Activated CD4-positive, alpha-beta T cell treated with anti-CD3 and anti-CD28 coated beads for 36 hours (primary cell): ENCODE measurements at regions of chr21 and their contacts with region 1.

Region 1: GRCh38 chr21:42002421-42002958 is 7.7 kb downstream of the ZBTB21 start:
- DNase-seq: peak; percentile 90
- ATAC-seq: peak; percentile 92
- H3K4me3 Mint-ChIP-seq: peak overlapping the region; percentile 52
- H3K27ac Mint-ChIP-seq: peak overlapping the region; percentile 93
- H3K4me1 Mint-ChIP-seq: peaks cover 61% of the 10 kb centered on the region
- H3K27me3 Mint-ChIP-seq: no peaks in the 10 kb centered on the region

Region 2: DNA sequence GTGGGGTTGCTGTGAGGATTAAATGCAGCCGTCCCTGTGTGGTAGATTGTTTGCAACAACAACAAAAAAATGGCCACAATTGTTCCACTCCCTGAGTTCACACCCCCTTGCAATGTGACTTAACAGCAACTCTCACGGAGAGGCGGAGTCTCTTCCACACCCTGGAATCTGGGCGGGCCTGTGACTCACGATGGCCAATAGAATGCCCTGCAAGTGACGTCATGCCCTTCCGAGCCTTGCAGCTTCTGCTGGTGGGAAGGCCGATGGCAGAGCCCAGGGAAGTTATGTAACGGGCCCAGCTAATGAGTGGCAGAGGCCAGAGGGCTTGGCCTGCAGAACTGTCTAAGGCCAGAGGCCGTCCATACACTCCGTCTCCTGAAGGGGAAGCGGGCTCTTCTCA is 323.5 kb before region 1 on chr21:
- CTCF ChIA-PET with region 1: no interaction called
- POLR2A ChIA-PET with region 1: no interaction called
- intact Hi-C with region 1: no loop called
- DNase-seq: peak; percentile 37
- ATAC-seq: peak; percentile 33
- H3K4me3 Mint-ChIP-seq: no peak overlapping the region
- H3K27ac Mint-ChIP-seq: no peak overlapping the region
- H3K4me1 Mint-ChIP-seq: no peaks in the 10 kb centered on the region
- H3K27me3 Mint-ChIP-seq: peaks cover 3% of the 10 kb centered on the region

Region 3: GRCh38 chr21:41901099-41901498 is 101.4 kb before region 1 on chr21:
- CTCF ChIA-PET with region 1: interaction called, 3 read pairs
- POLR2A ChIA-PET with region 1: interaction called, 5 read pairs
- intact Hi-C with region 1: loop called in 1 of 2 experiments (anchors 1 kb)
- DNase-seq: peak; percentile 79
- ATAC-seq: peak; percentile 74
- H3K4me3 Mint-ChIP-seq: peak overlapping the region; percentile 32
- H3K27ac Mint-ChIP-seq: peak overlapping the region; percentile 95
- H3K4me1 Mint-ChIP-seq: peaks cover 35% of the 10 kb centered on the region
- H3K27me3 Mint-ChIP-seq: no peaks in the 10 kb centered on the region

Region 4: GRCh38 chr21:41957991-41958766 is 44.3 kb before region 1 on chr21:
- CTCF ChIA-PET with region 1: interaction called, 3 read pairs
- POLR2A ChIA-PET with region 1: interaction called, 3 read pairs
- intact Hi-C with region 1: loop called in 1 of 2 experiments (anchors 5 kb)
- DNase-seq: no peak
- ATAC-seq: no peak
- H3K4me3 Mint-ChIP-seq: no peak overlapping the region
- H3K27ac Mint-ChIP-seq: no peak overlapping the region
- H3K4me1 Mint-ChIP-seq: peaks cover 17% of the 10 kb centered on the region
- H3K27me3 Mint-ChIP-seq: peaks cover 17% of the 10 kb centered on the region

Region 5: DNA sequence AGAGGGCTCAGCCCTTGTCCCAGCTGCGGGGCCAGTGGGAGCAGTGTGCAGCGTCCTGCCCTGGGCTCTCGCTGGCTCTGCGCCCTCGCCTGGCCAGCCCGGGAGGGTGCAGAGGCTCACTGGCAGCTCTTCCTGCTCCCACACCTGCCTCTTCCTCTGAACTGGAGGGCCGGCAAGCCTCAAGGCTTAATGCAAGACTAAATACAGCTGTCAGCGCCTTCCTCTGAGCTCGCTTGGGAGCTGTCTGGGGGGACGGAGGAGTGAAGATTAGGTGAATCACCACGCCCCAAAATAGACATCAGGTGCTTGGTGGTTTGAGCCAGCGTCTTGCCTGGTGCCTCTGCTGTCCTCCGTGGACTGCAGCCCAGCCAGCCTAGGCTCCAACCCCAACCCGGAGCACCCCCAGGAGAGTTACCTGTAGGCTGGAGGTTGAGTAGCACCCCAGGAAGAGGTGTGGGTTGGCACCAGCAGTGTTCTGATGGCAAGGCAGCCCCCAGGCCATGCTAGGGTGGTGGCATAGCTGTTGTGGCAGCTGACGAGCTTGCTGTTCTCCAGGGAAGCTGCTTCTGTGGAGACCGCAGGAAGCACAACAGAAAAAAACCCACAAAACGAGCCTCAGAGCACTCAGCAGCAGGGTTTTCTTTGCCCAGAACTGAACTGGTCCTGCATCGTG is 105.5 kb after region 1 on chr21:
- CTCF ChIA-PET with region 1: interaction called, 6 read pairs
- POLR2A ChIA-PET with region 1: interaction called, 4 read pairs
- intact Hi-C with region 1: loop called in 1 of 2 experiments (anchors 5 kb)
- DNase-seq: peak; percentile 83
- ATAC-seq: peak; percentile 99
- H3K4me3 Mint-ChIP-seq: peak overlapping the region; percentile 4
- H3K27ac Mint-ChIP-seq: no peak overlapping the region
- H3K4me1 Mint-ChIP-seq: peaks cover 11% of the 10 kb centered on the region
- H3K27me3 Mint-ChIP-seq: no peaks in the 10 kb centered on the region

Region 6: DNA sequence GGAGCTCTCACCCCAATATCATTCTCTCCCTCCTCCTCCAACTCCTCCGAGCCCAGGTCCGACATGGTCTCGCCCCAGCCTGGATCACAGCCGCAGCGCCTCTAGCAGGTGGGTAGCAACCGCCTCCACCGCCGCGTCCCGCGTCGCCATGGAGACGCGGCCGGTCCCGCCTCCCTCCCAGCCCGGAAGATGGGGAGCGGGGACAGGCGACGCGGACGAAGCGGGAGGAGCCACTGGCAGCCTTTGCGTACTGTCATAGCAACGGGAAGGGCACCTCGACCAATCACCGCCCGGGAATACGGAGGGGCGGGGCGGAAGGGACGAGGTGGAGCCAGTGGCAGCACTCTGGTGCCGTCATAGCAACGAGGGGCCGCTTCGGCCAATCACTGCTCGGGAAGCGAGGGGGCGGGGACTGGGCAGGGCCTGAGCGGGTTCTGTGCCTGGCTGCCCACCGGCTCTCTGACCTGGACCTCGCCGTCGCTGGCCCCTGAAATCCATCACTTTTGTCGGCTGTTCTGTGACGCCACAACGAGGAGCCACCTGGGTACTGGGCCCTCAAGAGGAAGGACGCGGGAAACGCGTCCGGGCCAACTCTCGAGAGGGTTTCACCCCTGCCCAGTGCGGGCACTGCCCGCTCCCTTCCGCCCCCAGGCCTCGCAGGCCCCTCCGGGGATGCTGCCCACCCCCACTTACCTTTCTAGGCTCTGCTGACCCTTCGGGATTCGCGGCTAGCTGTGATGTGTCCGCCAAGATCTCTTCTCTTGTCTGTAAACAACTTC is 493.8 kb after region 1 on chr21 and contains the start of gene RSPH1:
- CTCF ChIA-PET with region 1: no interaction called
- POLR2A ChIA-PET with region 1: no interaction called
- intact Hi-C with region 1: loop called in 1 of 2 experiments (anchors 2 kb)
- DNase-seq: peak; percentile 100
- ATAC-seq: peak; percentile 99
- H3K4me3 Mint-ChIP-seq: peak within 1 kb of the TSS; percentile 75
- H3K27ac Mint-ChIP-seq: peak within 1 kb of the TSS; percentile 69
- H3K4me1 Mint-ChIP-seq: peaks cover 25% of the 10 kb centered on the region
- H3K27me3 Mint-ChIP-seq: peaks cover 2% of the 10 kb centered on the region
- total RNA-seq, gene RSPH1: 0.21 to 0.34 TPM